ENCODE measurements at regions of chr6 and their contacts with region 1.

Region 1: GRCh38 chr6:11585426-11586016 is 48.0 kb downstream of the TMEM170B start:
- H3K4me3 Mint-ChIP-seq: no peak overlapping the region
- H3K27ac Mint-ChIP-seq: no peak overlapping the region
- H3K4me1 Mint-ChIP-seq: peaks cover 18% of the 10 kb centered on the region
- H3K27me3 Mint-ChIP-seq: no peaks in the 10 kb centered on the region

Region 2: GRCh38 chr6:11912426-11912825 is 326.9 kb after region 1 on chr6:
- intact Hi-C with region 1: loop called (anchors 2 kb)
- H3K4me3 Mint-ChIP-seq: no peak overlapping the region
- H3K27ac Mint-ChIP-seq: no peak overlapping the region
- H3K4me1 Mint-ChIP-seq: no peaks in the 10 kb centered on the region
- H3K27me3 Mint-ChIP-seq: no peaks in the 10 kb centered on the region

Region 3: DNA sequence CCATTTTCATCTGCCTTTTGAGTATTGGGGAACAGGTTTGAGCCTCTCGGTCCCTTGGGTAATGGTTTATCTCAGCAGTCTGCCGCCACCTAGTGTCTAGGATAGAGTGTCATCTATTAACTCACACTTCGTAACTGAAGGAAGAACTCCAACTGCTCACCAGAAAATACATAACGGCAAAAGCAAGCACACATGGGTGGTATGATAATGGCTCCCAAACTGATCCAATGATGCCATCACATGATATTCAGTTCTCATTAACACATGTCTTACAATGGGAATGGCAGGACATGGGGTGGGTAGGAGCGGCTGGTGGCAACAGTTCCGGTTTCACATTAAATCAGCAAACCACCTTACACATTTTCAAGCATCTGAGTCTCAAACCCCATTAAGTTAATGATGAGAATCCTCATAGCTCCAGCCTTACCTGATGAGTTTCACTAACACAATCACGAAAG is 1020.4 kb after region 1 on chr6:
- intact Hi-C with region 1: loop called (anchors 10 kb)
- H3K4me3 Mint-ChIP-seq: no peak overlapping the region
- H3K27ac Mint-ChIP-seq: no peak overlapping the region
- H3K4me1 Mint-ChIP-seq: peaks cover 7% of the 10 kb centered on the region
- H3K27me3 Mint-ChIP-seq: peaks cover 4% of the 10 kb centered on the region

Region 4: DNA sequence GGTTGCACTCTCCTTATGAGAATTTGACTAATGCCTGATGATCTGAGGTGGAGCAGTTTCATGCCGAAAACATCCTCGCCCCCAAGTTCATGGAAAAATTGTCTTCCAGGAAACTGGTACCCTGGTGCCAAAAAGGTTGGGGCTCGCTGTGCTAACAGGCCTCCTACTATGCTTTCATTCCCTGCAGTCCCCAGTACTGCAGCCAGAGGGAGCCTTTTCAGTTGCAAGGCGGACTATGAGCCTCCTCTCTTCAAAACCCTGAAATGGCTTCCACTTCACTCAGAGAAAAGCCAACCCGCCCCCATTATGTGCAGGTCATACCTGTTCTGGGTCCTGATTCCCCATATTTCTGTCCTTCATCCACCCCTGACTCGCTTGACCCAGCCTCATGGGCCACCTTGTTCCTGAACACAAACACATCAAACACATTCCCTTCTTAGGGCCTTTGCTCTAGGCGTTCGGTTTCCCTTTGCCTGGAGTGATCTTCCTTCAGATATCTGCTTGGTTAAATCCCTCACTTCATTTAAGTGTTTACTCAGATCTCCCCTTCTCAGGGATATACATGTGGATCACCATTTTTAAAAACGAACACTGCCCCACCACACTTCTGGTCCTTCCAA is 1304.8 kb after region 1 on chr6:
- intact Hi-C with region 1: loop called (anchors 5 kb)
- H3K4me3 Mint-ChIP-seq: no peak overlapping the region
- H3K27ac Mint-ChIP-seq: no peak overlapping the region
- H3K4me1 Mint-ChIP-seq: no peaks in the 10 kb centered on the region
- H3K27me3 Mint-ChIP-seq: peaks cover 8% of the 10 kb centered on the region

Measured in dendritic cell treated with granulocyte-macrophage colony-stimulating factor and Interleukin-4, amounts not matched to agents 40 ng/mL and 50 ng/mL, for 4 days (primary cell).